Right ventricle myocardium inferior (tissue), 1 donor: ENCODE measurements at regions of chr1 and their contacts with region 1.

Region 1: DNA sequence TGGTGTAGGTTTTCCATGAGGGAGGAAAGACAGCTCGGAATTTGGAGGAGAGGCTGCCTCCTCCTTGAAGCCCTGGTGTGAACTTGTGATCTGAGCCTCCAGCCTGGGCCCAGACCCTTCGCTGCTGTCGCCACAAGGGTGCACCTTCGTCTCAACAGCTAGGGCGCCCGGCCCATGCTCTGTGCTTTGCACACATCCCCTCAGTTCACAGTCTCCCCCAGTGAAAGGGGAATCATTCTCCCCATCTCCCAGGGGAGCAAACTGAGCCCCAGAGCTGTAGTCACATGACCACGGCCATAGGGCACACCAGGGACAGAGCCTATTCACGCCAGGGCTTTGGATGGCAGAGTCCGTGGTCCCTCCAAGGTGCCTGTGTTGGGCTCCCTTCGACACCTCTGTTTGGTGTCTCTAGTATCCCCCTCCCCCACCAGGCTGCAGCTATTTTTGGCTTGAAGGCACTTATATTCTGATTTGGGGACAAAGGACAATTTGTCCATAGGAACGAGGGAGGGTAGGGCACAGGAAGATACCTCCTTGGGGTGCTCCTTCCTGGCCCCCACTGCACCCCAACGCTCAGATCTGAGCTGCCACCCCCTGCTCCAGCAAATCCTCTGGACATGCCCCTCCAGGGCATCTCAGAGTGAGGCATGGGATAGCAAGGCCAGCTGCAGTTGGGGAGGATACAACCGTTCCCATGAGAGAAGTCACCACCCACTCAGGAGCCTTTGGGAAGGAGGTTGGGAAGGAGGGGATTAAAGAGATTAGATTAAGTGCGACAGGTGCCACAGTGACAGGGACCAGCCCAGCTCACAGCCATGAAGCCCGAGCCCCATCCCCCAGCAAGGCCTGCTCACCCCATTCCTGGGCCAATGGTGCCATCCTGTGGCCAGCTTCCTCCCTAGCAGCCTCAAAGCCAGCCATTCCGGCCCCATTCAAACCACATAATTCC is 15.7 kb downstream of the MATN1 start:
- DNase-seq: no peak
- ATAC-seq: peak; percentile 83

Region 2: GRCh38 chr1:28886731-28887418 is 1820.8 kb before region 1 on chr1:
- intact Hi-C with region 1: loop called (anchors 5 kb)
- DNase-seq: peak; percentile 93
- ATAC-seq: peak; percentile 79

Region 3: GRCh38 chr1:29235955-29236684 is 1471.6 kb before region 1 on chr1 and contains the start of gene PTPRU:
- intact Hi-C with region 1: loop called (anchors 2 kb)
- DNase-seq: peak; percentile 90
- ATAC-seq: peak; percentile 84
- total RNA-seq, gene PTPRU: 23.5 TPM

Region 4: GRCh38 chr1:29793101-29793546 is 914.6 kb before region 1 on chr1:
- intact Hi-C with region 1: loop called (anchors 5 kb)
- DNase-seq: no peak
- ATAC-seq: peak; percentile 62

Region 5: GRCh38 chr1:30111431-30111830 is 596.3 kb before region 1 on chr1:
- intact Hi-C with region 1: loop called (anchors 2 kb)
- DNase-seq: no peak
- ATAC-seq: peak; percentile 62

Region 6: DNA sequence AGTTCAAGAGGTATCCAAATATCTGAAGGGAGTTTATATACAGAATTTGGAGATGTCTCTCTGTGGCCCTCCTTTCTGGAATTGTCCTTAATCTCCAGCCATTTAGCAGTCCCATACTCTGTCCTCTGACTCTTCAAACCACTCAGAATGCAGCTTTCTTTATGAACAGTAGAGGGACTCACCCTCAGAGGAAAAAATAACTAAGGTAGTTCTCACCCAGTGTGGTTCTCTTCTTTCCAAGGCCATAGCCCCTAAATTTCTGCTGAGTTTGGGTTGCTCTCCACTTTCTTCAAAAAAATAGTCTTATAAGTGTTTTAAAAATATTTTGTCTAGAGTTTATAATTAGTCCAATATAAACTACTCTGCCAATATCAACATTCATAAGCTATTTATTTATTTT is 354.0 kb before region 1 on chr1:
- intact Hi-C with region 1: loop called (anchors 10 kb)
- DNase-seq: no peak
- ATAC-seq: no peak

Region 7: GRCh38 chr1:30525971-30526651 is 181.6 kb before region 1 on chr1:
- intact Hi-C with region 1: loop called (anchors 5 kb)
- DNase-seq: no peak
- ATAC-seq: peak; percentile 6

Region 8: DNA sequence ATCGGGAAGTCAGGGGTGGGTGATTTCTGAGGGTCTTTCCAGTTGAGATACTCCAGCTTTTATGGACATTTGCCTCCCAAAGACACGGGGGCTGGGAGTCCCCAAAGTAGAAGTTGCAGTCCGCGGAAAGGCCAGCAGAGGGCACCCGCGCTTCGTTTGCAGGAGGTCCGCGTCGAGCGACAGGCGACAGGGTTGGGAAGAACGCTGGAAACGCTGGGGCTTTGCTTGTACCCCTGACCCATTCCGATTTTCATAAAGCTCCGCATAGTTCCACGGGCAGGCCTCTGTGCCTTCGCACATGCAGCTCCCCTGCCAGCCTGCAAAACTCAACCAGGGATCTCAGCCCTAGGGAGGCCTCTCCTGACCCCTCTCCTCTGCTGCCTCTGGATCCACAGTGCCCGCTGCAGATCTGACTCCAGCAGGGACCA is 94.1 kb after region 1 on chr1:
- intact Hi-C with region 1: no loop called
- DNase-seq: peak; percentile 91
- ATAC-seq: peak; percentile 60